H1 (cell line): ENCODE measurements at regions of chr2 and their contacts with region 1.

Region 1: GRCh38 chr2:219552382-219553167 is 8.7 kb downstream of the TMEM198 start:
- DNase-seq: peak in 1 of 2 experiments; percentile 100
- H3K4me3 ChIP-seq: peak overlapping the region; percentile 58 to 77 (median 68)
- H3K27ac ChIP-seq: no peak overlapping the region; the same call in 1 of the 2 replicates
- H3K4me1 ChIP-seq: peaks cover 0 to 15% (median 8%) of the 10 kb centered on the region in 4 experiments; a peak in 6 of 7 replicates
- H3K27me3 ChIP-seq: peaks cover 0 to 15% (median 13%) of the 10 kb centered on the region in 4 experiments; a peak in 6 of 7 replicates
- CTCF ChIP-seq: no peak
- EP300 ChIP-seq: no peak
- POLR2A ChIP-seq: peak in 1 of 2 experiments; percentile 80; a peak in 2 of 3 replicates
- RAD21 ChIP-seq: no peak

Region 2: GRCh38 chr2:219308142-219309093 is 244.2 kb before region 1 on chr2:
- CTCF ChIA-PET with region 1: no interaction called
- POLR2A ChIA-PET with region 1: no interaction called
- DNase-seq: peak in 1 of 2 experiments; percentile 97
- H3K4me3 ChIP-seq: peak overlapping the region; percentile 38 to 74 (median 44)
- H3K27ac ChIP-seq: no peak overlapping the region
- H3K4me1 ChIP-seq: peaks cover 0 to 9% (median 4%) of the 10 kb centered on the region in 4 experiments; a peak in 5 of 7 replicates
- H3K27me3 ChIP-seq: peaks cover 0 to 14% (median 12%) of the 10 kb centered on the region in 4 experiments; a peak in 4 of 7 replicates
- CTCF ChIP-seq: no peak
- EP300 ChIP-seq: no peak
- POLR2A ChIP-seq: no peak
- RAD21 ChIP-seq: no peak

Region 3: GRCh38 chr2:219565130-219566080 is 12.8 kb after region 1 on chr2:
- CTCF ChIA-PET with region 1: interaction called, 66 read pairs
- POLR2A ChIA-PET with region 1: interaction called, 293 read pairs
- DNase-seq: peak in 1 of 2 experiments; percentile 79
- H3K4me3 ChIP-seq: peak overlapping the region in 2 of 4 experiments; percentile 15 to 32; a peak in 3 of 8 replicates
- H3K27ac ChIP-seq: peak overlapping the region; percentile 92
- H3K4me1 ChIP-seq: peaks cover 6 to 64% (median 53%) of the 10 kb centered on the region in 4 experiments
- H3K27me3 ChIP-seq: peaks cover 0 to 2% (median 0%) of the 10 kb centered on the region in 4 experiments; a peak in 1 of 7 replicates
- CTCF ChIP-seq: no peak
- EP300 ChIP-seq: peak in 1 of 2 experiments; percentile 93; a peak in 1 of 3 replicates
- POLR2A ChIP-seq: peak in 1 of 2 experiments; percentile 81; a peak in 2 of 3 replicates
- RAD21 ChIP-seq: no peak

Region 4: DNA sequence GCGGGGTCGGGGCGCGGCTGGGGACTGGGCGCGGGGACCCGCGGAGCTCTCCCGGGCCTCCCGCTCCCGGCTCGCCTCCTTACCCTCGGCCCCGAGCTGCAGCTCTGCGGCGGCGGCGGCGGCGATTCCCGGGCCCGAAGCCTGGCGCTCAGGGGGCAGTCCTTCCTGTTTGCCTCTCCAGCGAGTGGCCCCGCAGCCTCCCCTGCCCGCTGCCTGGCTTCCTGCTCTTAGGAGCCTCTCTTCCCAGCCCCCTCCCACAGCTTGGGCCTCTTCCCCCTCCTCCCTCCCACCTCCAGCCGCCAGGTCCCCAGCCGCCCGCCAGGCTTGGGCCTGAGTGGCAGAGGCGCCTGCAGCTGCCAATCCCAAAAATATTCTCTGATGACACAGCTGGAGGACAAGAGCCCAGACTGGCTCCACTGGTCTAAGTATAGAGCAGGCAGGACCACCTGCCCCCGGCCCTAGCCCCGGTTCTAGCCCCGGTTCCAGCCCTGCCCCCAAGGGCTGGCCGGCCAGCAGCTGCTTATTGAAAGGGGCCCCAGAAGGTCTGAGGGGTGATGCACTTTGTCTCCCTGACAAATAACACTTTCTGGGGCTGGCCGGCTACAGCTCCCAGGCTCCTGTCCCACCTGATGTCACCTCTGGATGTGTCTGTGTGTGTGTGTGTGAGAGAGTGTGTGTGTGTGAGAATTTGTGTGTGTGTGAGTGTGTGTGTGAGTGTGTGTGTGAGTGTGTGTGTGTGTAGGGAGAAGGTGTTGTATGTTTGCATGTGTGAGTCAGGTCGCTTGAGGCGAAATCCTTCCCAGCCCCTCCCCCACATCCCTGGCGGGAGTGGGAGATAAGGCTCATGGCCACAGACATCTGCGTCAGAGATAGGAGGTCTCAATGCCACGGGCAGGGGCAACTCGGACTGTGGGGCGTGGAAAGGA is 19.0 kb after region 1 on chr2 and contains the start of gene OBSL1:
- CTCF ChIA-PET with region 1: interaction called, 64 read pairs
- POLR2A ChIA-PET with region 1: interaction called, 293 read pairs
- DNase-seq: peak in 1 of 2 experiments; percentile 88
- H3K4me3 ChIP-seq: peak within 1 kb of the TSS; percentile 45 to 74 (median 58)
- H3K27ac ChIP-seq: peak within 1 kb of the TSS; percentile 42; the same call in 1 of the 2 replicates
- H3K4me1 ChIP-seq: peaks cover 2 to 29% (median 22%) of the 10 kb centered on the region in 4 experiments
- H3K27me3 ChIP-seq: peaks cover 0 to 2% (median 0%) of the 10 kb centered on the region in 4 experiments; a peak in 2 of 7 replicates
- CTCF ChIP-seq: no peak
- EP300 ChIP-seq: no peak
- POLR2A ChIP-seq: no peak; a peak in 1 of 3 replicates
- RAD21 ChIP-seq: no peak
- total RNA-seq, gene OBSL1: 127 and 135 TPM in 2 replicates

Region 5: GRCh38 chr2:219886615-219887014 is 334.0 kb after region 1 on chr2:
- CTCF ChIA-PET with region 1: no interaction called
- POLR2A ChIA-PET with region 1: no interaction called
- DNase-seq: no peak
- H3K4me3 ChIP-seq: no peak overlapping the region
- H3K27ac ChIP-seq: no peak overlapping the region
- H3K4me1 ChIP-seq: no peaks in the 10 kb centered on the region
- H3K27me3 ChIP-seq: no peaks in the 10 kb centered on the region; a peak in 1 of 7 replicates
- CTCF ChIP-seq: peak in 2 of 3 experiments; percentile 30 to 62; a peak in 2 of 4 replicates
- EP300 ChIP-seq: no peak
- POLR2A ChIP-seq: no peak
- RAD21 ChIP-seq: peak; percentile 65 to 70